Activated T-helper 1 cell treated with anti-CD3 and anti-CD28 coated beads, Interleukin-12 subunit alpha, Interleukin-12 subunit beta, Interleukin-2, Interleukin-4 antibody, amounts not matched to agents 30 ng/mL and 10 ng/mL and 1 ng/mL, durations not matched to agents 14 hours and 24 hours and 36 hours (primary cell): ENCODE measurements at regions of chr18 and their contacts with region 1.

Region 1: DNA sequence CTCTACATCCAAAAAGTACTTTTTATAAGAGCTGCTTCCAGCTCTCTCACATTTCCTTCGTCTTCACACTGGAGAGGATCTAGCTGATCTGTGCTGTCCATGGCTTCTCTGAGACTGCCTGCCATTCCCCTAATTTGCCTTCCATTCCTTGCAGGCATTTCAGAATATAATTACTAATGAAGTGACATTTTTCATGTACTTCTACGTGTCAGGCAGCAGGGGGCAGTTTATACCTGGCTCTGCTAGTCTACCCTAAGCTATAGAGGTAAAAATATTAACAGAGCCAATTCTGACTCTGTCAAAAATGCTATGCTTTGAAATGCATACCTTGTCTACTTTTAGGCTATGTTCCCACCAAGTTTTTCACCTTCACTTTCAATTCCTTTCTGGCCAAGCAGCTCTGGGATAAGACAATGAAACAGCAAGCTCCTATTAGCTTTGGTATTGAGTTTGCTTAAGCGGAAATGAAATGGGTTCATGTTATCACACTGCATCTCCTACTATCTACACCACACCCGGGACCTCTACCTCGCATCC is 81.9 kb downstream of the MEP1B start:
- DNase-seq: no peak
- H3K4me3 Mint-ChIP-seq: no peak overlapping the region
- H3K27ac Mint-ChIP-seq: no peak overlapping the region
- H3K4me1 Mint-ChIP-seq: no peaks in the 10 kb centered on the region
- H3K27me3 Mint-ChIP-seq: peaks cover 3% of the 10 kb centered on the region

Region 2: DNA sequence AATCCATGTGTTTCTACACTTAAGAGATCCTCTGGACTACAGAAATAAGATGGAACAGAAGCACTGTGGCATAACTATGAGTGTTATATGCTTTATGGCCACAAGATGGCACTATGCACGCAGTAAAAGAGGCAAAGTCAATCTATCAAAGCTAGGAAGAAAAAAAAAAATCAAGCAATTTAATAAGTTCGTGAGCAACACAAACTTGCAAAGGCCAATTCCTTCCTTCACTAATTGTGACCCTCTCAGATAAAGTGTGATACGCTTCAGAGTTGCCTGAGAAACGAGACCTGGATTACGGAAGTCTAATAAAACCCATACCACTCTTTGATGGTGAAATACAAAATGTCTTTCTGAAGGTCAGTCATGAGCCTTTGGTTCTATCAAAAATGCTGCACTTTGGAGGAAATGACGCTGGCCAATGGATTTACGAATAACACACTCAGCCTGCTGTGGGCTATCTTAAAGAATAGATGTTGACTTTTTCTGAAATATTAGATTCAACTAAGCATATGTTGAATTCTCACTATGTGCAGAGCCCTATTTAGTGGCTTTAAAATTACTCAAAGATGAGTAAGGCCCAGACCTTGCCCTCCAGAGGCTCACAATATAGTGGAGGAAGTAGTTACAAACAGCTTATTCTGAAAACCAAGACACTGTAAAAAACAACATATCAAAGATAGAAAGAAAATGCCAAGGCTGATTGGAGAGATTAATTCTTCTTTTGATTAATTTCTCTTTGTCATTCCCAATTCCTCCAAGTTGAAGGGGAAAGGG is 715.6 kb before region 1 on chr18:
- intact Hi-C with region 1: no loop called
- DNase-seq: peak; percentile 6
- H3K4me3 Mint-ChIP-seq: no peak overlapping the region
- H3K27ac Mint-ChIP-seq: no peak overlapping the region
- H3K4me1 Mint-ChIP-seq: no peaks in the 10 kb centered on the region
- H3K27me3 Mint-ChIP-seq: peaks cover 6% of the 10 kb centered on the region

Region 3: DNA sequence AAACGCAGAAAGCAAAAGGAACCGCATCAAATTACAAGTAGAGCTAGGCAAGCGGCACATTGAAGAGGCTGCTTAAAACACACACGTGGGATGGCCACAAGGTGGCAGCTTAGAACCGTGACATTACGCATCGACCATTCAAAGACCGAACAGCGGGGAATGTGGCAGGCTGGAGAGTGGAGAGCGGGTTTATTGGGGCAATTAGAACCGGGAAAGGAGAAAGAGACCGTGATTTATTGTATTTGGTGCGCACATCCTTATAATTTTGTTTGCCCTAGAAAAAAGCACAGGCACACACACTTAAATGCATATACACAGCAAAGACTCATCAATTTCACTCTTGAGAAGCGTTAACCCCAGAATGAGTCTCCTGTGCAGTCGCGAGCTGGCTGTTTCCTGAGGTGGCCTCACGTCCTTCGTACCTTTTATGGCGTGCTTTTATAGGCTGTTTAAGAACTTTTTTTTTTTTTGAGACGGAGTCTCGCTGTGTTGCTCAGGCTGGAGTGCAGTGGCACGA is 113.6 kb before region 1 on chr18:
- intact Hi-C with region 1: loop called (anchors 10 kb)
- DNase-seq: peak; percentile 52
- H3K4me3 Mint-ChIP-seq: peak overlapping the region; percentile 62
- H3K27ac Mint-ChIP-seq: no peak overlapping the region
- H3K4me1 Mint-ChIP-seq: peaks cover 8% of the 10 kb centered on the region
- H3K27me3 Mint-ChIP-seq: peaks cover 4% of the 10 kb centered on the region

Region 4: GRCh38 chr18:32213693-32214092 is 58.0 kb before region 1 on chr18:
- intact Hi-C with region 1: loop called (anchors 10 kb)
- DNase-seq: no peak
- H3K4me3 Mint-ChIP-seq: no peak overlapping the region
- H3K27ac Mint-ChIP-seq: no peak overlapping the region
- H3K4me1 Mint-ChIP-seq: no peaks in the 10 kb centered on the region
- H3K27me3 Mint-ChIP-seq: peaks cover 6% of the 10 kb centered on the region

Region 5: DNA sequence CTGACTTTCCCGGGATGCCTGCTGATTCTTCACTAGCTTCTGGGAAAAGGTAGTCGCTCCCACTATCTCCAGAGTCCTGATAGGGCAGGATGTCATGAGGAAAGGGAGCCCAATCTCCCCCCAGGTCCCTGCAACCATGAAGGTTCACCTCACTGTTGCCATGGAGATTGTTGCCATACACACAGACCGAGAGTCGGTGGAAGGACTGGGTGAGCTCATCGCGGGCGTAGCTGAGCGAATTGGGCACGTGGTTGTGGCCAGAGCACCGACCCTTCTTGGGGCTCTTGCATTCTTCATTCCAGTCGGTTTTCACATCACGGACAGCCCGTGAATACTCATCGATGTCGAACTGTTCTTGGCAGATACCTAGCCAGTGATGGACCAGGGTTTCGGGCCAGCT is 15.5 kb after region 1 on chr18:
- intact Hi-C with region 1: no loop called
- DNase-seq: no peak
- H3K4me3 Mint-ChIP-seq: no peak overlapping the region
- H3K27ac Mint-ChIP-seq: no peak overlapping the region
- H3K4me1 Mint-ChIP-seq: no peaks in the 10 kb centered on the region
- H3K27me3 Mint-ChIP-seq: no peaks in the 10 kb centered on the region

Region 6: DNA sequence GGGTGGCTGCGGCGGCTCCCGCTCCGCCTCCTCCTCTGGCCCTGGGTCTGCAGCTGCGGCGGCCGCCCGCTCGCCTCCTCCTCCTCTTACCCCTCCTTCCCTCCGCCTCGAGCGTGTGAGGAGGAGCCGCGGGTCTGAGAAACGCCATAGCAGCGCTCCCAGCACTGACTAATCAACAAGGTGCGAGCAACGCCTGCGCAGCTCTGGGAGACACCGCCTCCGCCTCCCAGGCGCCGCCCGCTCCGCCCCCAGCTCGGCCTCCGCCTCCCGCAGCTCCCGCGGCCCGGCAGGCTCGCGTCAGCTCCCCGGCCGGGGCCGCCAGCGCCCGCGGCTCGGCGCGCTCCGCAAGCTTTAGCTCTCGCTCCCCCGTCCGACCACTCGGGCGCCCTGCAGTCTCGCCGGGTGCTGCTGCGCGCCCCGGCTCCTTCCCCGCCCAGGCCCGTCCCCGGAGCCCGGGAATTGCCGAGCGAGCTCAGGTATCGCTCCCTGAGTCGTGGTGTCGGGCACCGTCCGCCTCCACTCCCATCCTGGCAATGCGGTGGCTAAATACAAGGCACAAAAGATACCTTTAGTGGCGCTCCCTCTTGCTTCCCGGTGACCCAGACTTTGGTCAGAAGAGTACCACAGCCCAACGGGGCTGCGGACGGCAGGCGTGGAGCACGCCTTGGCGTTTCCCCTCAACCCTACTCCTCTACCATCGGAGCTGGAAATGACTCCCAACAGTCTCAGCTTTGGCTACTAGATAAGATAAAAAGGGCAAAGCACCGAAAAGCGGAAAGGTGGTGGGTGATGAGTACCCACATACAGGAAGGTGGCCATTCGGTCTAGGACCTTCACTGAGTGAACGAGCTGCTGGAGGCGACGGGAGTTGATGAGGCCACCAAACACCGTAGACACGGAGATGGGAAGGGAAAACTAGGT is 199.2 kb after region 1 on chr18 and contains the start of gene GAREM1:
- intact Hi-C with region 1: loop called (anchors 5 kb)
- DNase-seq: peak; percentile 79
- H3K4me3 Mint-ChIP-seq: peak within 1 kb of the TSS; percentile 81
- H3K27ac Mint-ChIP-seq: no peak within 1 kb of the TSS
- H3K4me1 Mint-ChIP-seq: peaks cover 31% of the 10 kb centered on the region
- H3K27me3 Mint-ChIP-seq: peaks cover 63% of the 10 kb centered on the region
- total RNA-seq, gene GAREM1: not detected in 2 replicates